Gastrocnemius medialis (tissue), 4 donors: ENCODE measurements at regions of chr3 and their contacts with region 1.

Region 1: GRCh38 chr3:197224034-197224444 is 74.4 kb downstream of the DLG1 start:
- DNase-seq: no peak
- ATAC-seq: peak; percentile 36 to 45
- H3K4me3 ChIP-seq: no peak overlapping the region
- H3K27ac ChIP-seq: no peak overlapping the region
- H3K4me1 ChIP-seq: peaks cover 34 to 53% of the 10 kb centered on the region in 2 donors
- H3K27me3 ChIP-seq: no peaks in the 10 kb centered on the region
- CTCF ChIP-seq: peak; percentile 32 to 57 (median 41)
- POLR2A ChIP-seq: no peak

Region 2: GRCh38 chr3:197456261-197457091 is 232.4 kb after region 1 on chr3:
- in situ Hi-C with region 1: no loop called
- intact Hi-C with region 1: loop called (anchors 1 kb)
- DNase-seq: peak; percentile 55 to 64
- ATAC-seq: peak; percentile 69 to 88
- H3K4me3 ChIP-seq: peak overlapping the region; percentile 60 to 90 (median 72)
- H3K27ac ChIP-seq: peak overlapping the region; percentile 53 to 71 (median 63)
- H3K4me1 ChIP-seq: peaks cover 0 to 10% of the 10 kb centered on the region in 2 donors
- H3K27me3 ChIP-seq: peaks cover 0 to 2% (median 0%) of the 10 kb centered on the region in 3 donors
- CTCF ChIP-seq: no peak
- POLR2A ChIP-seq: peak in 1 of 2 donors; percentile 14

Region 3: GRCh38 chr3:197511130-197511529 is 287.1 kb after region 1 on chr3:
- in situ Hi-C with region 1: no loop called
- intact Hi-C with region 1: loop called (anchors 1 kb)
- DNase-seq: no peak
- ATAC-seq: no peak
- H3K4me3 ChIP-seq: no peak overlapping the region
- H3K27ac ChIP-seq: no peak overlapping the region
- H3K4me1 ChIP-seq: peaks cover 0 to 1% of the 10 kb centered on the region in 2 donors
- H3K27me3 ChIP-seq: peaks cover 0 to 9% (median 0%) of the 10 kb centered on the region in 3 donors
- CTCF ChIP-seq: no peak
- POLR2A ChIP-seq: no peak

Region 4: DNA sequence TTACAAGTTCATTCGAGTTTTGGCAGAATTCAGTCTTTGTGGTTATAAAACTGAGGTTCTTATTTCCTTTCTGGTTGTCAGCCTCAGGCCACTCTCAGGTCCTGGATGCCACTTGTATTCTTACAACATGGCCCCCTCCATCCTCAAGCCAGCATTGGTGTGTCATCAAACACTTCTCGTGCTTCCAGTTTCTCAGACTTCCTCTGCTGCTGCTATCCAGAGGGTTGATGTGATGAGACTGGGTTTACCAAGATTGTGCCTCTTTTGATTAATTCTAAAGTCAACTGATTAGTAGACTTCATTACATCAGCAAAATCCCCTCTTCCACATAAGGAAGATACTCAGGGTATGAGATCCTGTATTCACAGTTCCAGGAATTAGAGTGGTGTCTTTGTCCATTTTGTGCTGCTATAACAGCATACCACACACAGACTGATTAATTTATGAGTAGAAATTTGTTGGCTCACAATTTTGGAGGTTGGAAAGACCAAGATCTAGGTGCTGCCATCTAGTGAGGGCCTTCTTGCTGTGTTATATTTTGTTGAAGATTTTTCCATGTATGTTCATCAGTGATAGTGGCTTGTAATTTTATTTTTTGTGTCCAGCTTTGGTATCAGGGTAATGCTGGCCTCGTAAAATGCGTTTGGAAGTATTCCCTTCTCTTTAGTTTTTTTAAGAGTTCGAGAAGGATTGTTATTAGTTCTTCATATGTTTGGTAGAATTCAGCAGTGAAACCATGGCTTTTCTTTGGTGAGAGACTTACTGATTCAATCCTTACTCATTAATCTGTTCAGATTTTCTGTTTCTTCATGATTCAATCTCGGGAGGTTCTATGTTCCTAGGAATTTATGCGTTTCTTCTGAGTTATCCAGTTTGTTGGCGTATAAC is 578.1 kb after region 1 on chr3:
- in situ Hi-C with region 1: no loop called
- intact Hi-C with region 1: no loop called
- DNase-seq: no peak
- ATAC-seq: peak in 1 of 2 donors; percentile 21
- H3K4me3 ChIP-seq: no peak overlapping the region
- H3K27ac ChIP-seq: no peak overlapping the region
- H3K4me1 ChIP-seq: peaks cover 24 to 32% of the 10 kb centered on the region in 2 donors
- H3K27me3 ChIP-seq: no peaks in the 10 kb centered on the region
- CTCF ChIP-seq: peak in 1 of 5 experiments; percentile 19
- POLR2A ChIP-seq: no peak